Activated CD4-positive, alpha-beta T cell treated with anti-CD3 and anti-CD28 coated beads, Interleukin-2, amount 10 ng/mL, durations not matched to agents 7 days and 5 days (primary cell): ENCODE measurements at regions of chr12 and their contacts with region 1.

Region 1: GRCh38 chr12:120292661-120293531 is at the start of gene RNU4-1:
- DNase-seq: peak; percentile 86
- H3K4me3 Mint-ChIP-seq: no peak within 1 kb of the TSS
- H3K27ac Mint-ChIP-seq: no peak within 1 kb of the TSS
- H3K4me1 Mint-ChIP-seq: peaks cover 12% of the 10 kb centered on the region
- H3K27me3 Mint-ChIP-seq: peaks cover 6% of the 10 kb centered on the region
- total RNA-seq, gene RNU4-1: 672 to 1,846 TPM

Region 2: DNA sequence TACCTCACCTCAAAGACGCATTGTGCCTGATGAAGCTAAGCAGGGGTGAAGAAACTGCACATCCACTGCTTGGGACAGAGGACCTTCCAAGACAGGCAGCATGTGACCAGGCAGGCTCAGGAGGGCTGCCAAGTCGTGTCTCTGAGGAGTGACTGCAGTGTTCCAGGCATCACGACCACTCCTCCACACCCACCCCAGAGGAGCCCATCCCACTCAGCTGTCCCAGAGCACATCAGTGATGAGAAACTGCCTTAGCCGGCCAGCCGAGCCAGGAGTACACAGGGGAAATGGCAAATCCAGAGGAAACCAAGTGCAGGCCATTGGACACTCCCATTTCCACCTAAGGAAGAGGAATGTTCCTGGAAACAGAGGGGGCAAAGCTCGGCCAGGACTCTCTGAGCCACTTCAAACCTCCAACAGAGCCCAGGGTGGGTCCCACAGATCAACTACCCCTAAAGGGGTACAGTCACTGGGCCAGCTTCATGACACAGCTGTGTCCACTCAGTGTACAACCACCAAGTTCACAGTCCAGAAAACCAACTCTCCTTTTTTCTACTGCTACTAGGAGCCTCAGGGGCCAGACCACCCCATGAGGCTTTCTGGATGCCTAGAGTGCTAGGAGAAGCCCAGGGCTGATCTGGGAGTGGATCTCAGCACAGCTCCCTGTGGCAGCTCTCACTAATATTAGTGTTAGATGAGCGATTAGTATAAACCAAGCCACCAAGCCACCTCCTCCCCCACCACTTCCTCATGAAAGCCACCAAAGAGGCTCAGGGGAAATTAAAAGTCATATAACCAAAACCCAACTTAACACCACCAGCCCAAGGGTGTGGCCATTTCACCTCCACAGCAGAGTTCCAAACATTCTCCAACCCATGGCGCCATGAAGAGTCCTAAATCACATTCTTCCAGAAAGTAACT is 42.8 kb before region 1 on chr12:
- CTCF ChIA-PET with region 1: interaction called, 4 read pairs
- POLR2A ChIA-PET with region 1: interaction called, 13 read pairs
- DNase-seq: peak; percentile 59
- H3K4me3 Mint-ChIP-seq: peak overlapping the region; percentile 65
- H3K27ac Mint-ChIP-seq: peak overlapping the region; percentile 97
- H3K4me1 Mint-ChIP-seq: peaks cover 82% of the 10 kb centered on the region
- H3K27me3 Mint-ChIP-seq: no peaks in the 10 kb centered on the region

Region 3: DNA sequence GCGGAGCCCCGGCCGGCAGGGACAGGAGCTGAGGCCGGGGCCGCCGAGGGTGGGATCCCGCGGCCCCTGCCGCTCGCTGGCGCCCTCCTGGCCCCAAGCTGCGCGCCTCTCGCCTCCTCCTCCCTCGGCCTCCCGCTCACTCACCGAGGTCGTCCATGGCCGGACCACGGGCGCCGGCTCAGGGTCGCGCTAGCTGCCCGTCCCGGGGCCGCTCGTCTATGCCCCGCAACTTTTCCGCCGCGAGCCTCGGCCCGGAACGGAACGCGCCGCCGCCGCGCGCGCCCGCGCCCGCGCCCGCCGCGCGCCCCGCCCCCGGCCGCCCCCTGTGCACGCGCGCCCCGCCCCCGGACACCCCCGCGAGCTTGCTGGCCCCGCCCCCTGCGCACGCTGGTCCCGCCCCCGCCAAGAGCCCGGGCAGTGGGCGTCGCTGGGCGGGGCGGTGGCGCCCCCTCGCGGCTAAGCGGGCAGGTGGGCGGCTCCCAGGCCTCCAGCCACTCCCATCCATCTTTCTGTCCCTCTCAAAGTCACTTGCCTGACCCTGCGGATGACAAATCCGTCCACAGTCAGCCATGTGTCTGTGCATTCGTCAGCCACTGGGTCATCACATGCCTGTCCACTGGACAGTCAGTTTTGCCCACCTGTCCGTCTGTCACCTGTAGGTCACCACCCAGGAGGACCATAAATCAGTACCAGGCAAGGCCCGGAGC is 27.3 kb before region 1 on chr12 and contains the start of gene PXN:
- CTCF ChIA-PET with region 1: interaction called, 16 read pairs
- POLR2A ChIA-PET with region 1: interaction called, 24 read pairs
- DNase-seq: peak; percentile 88
- H3K4me3 Mint-ChIP-seq: peak within 1 kb of the TSS; percentile 88
- H3K27ac Mint-ChIP-seq: peak within 1 kb of the TSS; percentile 83
- H3K4me1 Mint-ChIP-seq: peaks cover 39% of the 10 kb centered on the region
- H3K27me3 Mint-ChIP-seq: no peaks in the 10 kb centered on the region
- total RNA-seq, gene PXN: 201 to 236 TPM

Region 4: DNA sequence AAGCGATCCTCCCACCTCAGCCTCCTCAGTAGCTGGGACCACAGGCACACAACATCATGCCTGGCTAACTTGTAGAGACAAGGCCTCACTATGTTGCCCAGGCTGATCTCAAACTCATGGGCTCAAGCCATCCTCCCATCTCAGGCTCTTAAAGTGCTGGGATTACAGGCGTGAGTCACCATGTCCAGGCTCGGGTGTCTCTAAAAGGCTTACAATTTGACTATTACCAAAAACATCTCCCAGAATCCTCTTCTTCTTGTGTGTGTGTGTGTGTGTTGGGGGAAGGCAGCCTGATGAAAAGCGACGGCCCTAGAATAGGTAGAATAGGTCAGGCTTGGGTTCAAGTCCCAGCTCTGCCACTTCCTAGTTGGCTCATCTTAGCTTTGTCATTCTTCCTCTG is 59.2 kb after region 1 on chr12:
- CTCF ChIA-PET with region 1: no interaction called
- POLR2A ChIA-PET with region 1: no interaction called
- DNase-seq: no peak
- H3K4me3 Mint-ChIP-seq: no peak overlapping the region
- H3K27ac Mint-ChIP-seq: no peak overlapping the region
- H3K4me1 Mint-ChIP-seq: no peaks in the 10 kb centered on the region
- H3K27me3 Mint-ChIP-seq: no peaks in the 10 kb centered on the region

Region 5: GRCh38 chr12:122081697-122082221 is 1788.9 kb after region 1 on chr12:
- CTCF ChIA-PET with region 1: no interaction called
- POLR2A ChIA-PET with region 1: interaction called, 12 read pairs
- DNase-seq: peak; percentile 64
- H3K4me3 Mint-ChIP-seq: peak overlapping the region; percentile 92
- H3K27ac Mint-ChIP-seq: peak overlapping the region; percentile 91
- H3K4me1 Mint-ChIP-seq: peaks cover 67% of the 10 kb centered on the region
- H3K27me3 Mint-ChIP-seq: no peaks in the 10 kb centered on the region